Breast epithelium (tissue), 4 donors: ENCODE measurements at regions of chr4 and their contacts with region 1.

Region 1: DNA sequence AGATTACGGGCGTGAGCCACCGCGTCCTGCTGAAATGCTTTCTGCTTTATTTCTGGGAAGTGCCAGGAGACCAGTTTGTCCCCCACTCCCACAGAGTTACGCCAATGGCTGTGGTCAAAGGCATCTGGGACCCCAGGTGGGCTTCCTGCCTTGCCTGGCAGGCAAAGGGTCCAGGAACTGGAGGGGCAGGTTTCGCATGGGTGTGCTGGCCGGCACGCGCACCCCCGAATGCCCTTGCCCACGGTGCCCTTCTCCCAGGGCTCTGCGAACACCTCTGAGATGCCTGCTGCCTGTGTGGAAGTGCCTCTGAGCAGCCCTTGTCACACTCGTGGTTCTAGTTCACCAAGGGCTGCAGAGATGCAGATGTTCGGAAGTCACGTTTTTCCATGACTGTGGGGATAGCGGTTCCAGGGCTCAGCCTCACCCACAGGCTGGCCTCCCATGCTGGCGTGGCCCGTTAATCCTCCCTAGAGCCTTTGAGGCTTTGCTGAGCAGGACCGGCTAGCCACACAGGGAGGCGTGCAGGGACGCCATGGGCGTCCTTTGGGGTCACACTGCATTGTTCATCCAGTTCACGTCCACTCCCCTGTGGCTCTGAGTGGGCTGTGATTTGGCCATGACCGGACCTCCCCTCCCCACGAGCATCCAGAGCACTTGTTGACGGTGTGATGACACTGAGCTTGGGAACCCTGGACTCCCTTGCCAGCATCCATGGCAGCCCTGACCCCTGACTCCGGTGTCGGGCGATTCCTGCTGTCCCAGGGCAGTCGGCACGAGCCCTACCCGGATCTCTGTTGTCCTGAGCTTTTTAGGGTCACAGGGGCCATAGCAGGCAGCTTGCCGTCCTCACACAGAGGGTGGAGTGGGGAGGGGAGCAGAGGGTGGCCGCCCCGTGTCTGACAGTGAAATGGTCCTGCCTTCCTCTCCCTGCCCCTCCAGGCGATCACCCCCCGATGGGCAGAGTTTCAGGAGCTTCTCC is 12.7 kb upstream of the ADD1 start:
- DNase-seq: peak in 1 of 2 donors; percentile 10
- H3K4me3 ChIP-seq: no peak overlapping the region
- H3K27ac ChIP-seq: no peak overlapping the region
- H3K4me1 ChIP-seq: no peaks in the 10 kb centered on the region
- H3K27me3 ChIP-seq: no peaks in the 10 kb centered on the region
- CTCF ChIP-seq: no peak
- POLR2A ChIP-seq: no peak

Region 2: GRCh38 chr4:2800691-2801596 is 30.0 kb before region 1 on chr4:
- intact Hi-C with region 1: loop called (anchors 1 kb)
- DNase-seq: peak; percentile 52 to 57
- H3K4me3 ChIP-seq: peak overlapping the region; percentile 17 to 58 (median 30)
- H3K27ac ChIP-seq: peak overlapping the region; percentile 87
- H3K4me1 ChIP-seq: peaks cover 36 to 66% of the 10 kb centered on the region in 2 donors
- H3K27me3 ChIP-seq: no peaks in the 10 kb centered on the region
- CTCF ChIP-seq: no peak
- POLR2A ChIP-seq: no peak